Mucosa of descending colon (tissue), 3 donors: ENCODE measurements at regions of chr20 and their contacts with region 1.

Region 1: DNA sequence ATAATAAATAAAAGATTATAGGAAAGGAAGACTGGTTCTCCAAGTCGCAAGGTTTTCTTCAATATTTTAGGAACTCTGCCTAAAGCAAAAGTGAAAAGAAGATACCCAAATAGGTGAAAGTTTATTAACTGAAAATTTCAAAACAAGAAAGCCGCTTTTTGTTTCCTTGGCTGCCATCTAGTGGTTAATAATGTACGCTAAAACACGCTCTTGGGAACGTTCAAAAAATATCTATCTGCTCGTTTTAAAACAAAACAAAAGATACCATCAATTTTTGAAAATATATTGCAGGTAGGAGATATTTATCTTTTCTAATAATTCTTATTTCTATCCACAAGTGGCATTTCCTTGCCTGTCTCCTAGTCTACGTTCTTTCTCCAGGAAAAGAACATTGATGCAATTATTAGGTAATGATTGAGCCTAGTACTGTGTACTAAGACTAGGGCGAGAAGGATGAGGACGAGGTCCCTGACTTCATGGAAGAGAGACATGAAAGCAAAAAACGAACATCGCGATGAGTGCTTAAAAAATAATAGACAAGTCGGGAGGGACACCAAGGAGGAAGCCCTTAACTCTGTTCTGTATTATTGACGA is 97.2 kb downstream of the SPTLC3 start:
- DNase-seq: peak in 1 of 3 donors; percentile 29
- ATAC-seq: no peak
- H3K4me3 ChIP-seq: no peak overlapping the region
- H3K4me1 ChIP-seq: no peaks in the 10 kb centered on the region
- CTCF ChIP-seq: no peak

Region 2: GRCh38 chr20:12925214-12925755 is 180.7 kb before region 1 on chr20:
- intact Hi-C with region 1: loop called in 1 of 2 experiments (anchors 10 kb)
- DNase-seq: peak in 2 of 3 donors; percentile 33 to 58
- ATAC-seq: peak; percentile 93
- H3K4me3 ChIP-seq: no peak overlapping the region
- H3K4me1 ChIP-seq: no peaks in the 10 kb centered on the region
- CTCF ChIP-seq: peak; percentile 57

Region 3: GRCh38 chr20:12970372-12970821 is 135.6 kb before region 1 on chr20:
- intact Hi-C with region 1: loop called (anchors 5 kb)
- DNase-seq: peak in 1 of 3 donors; percentile 51
- ATAC-seq: peak; percentile 35
- H3K4me3 ChIP-seq: no peak overlapping the region
- H3K4me1 ChIP-seq: no peaks in the 10 kb centered on the region
- CTCF ChIP-seq: peak; percentile 22

Region 4: DNA sequence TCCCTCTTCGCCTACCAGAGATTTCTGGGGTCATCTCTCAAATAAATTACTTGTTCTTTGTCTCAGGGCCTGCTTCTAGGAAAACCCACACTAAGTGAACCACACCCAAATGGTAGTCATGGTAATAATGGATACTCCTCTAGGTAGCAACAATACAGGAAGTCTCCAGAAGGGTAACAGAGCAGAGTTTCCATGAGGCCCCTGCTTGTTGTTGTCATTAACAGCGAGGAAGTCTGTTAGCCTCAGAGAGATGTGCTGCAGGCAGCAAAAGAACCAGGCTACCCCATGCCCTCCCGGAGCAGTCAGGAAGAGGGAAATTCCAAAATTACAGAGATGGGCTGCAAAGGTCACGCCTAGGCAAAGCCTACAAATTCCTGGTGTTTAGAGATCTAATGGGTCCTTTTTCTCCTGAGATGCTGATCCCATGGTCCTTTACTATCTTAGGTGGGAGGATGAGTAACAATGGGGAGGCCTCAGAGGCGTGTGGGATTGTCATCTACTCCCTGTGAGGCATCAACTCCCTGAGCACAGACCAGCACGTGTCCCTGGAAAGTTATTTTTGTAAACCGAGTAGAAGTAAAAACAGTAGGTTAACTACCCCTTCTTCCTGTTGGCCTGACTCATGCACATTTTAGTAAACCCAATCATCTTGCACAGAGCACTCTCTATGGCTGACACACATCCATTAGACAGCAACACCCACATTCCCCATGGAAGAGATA is 125.2 kb after region 1 on chr20:
- intact Hi-C with region 1: no loop called
- DNase-seq: no peak
- ATAC-seq: peak; percentile 39
- H3K4me3 ChIP-seq: no peak overlapping the region
- H3K4me1 ChIP-seq: no peaks in the 10 kb centered on the region
- CTCF ChIP-seq: no peak